AG04449 (cell line): ENCODE measurements at regions of chrX and their contacts with region 1.

Region 1: DNA sequence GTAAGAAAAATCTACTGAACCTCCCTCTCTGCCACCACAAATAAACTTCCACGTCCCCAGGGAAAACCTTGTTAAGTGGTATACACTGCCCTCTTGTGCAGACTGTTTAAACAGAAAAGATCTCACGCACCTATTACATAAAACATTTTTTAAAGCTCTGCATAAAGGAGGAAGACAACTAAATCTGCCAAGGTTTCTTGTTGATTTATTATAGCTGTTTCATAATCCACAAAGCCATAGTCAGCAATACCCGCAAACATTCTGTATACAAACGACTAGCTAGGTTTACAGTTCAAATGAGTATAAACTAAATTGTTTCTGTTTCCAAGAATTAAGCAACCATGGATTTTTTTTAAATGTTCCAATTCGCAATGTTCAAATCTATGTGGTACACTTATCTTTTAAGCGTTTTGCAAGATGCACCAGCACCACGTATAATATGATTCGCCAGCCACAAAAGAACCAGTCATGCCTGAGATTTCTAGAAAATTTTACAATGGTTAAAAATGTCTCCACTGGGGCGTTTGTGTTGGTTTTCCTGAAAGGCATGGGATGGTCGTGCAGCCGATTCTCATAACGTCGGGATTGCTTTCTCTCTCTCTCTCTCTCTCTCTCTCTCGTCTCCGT is 164.6 kb downstream of the PRKX start:
- DNase-seq: no peak
- H3K4me3 ChIP-seq: peak overlapping the region; percentile 46
- CTCF ChIP-seq: no peak

Region 2: DNA sequence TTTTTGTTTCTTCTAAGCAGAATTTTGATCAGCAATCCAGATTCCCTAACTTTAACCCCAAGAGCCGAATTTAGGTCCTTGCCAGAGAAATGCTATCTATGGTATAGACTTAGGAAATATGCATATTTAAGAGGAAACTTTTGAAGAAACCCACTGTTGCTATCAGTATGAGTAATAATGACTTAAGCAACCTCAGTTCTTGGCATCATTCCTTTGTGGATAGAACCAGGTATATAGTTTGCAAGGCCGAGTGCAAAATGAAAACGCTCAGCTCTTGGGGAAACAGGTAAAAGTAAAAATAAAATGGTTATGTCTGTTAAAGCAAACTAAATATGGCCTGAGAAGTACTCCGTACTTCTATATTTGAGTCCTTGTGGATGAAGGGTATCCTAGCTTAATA is 429.5 kb before region 1 on chrX:
- CTCF ChIA-PET with region 1: interaction called, 10 read pairs
- POLR2A ChIA-PET with region 1: no interaction called
- DNase-seq: no peak
- H3K4me3 ChIP-seq: no peak overlapping the region
- CTCF ChIP-seq: no peak

Region 3: GRCh38 chrX:3345281-3346191 is 203.3 kb before region 1 on chrX:
- CTCF ChIA-PET with region 1: interaction called, 13 read pairs
- POLR2A ChIA-PET with region 1: no interaction called
- DNase-seq: no peak
- H3K4me3 ChIP-seq: peak overlapping the region; percentile 57
- CTCF ChIP-seq: no peak